Mammary epithelial cell (primary cell): ENCODE measurements at regions of chr15 and their contacts with region 1.

Region 1: GRCh38 chr15:101258238-101259144 is 6.6 kb upstream of the CHSY1 start:
- DNase-seq: no peak
- H3K4me3 ChIP-seq: no peak overlapping the region
- H3K27ac ChIP-seq: no peak overlapping the region
- H3K4me1 ChIP-seq: no peaks in the 10 kb centered on the region
- H3K27me3 ChIP-seq: no peaks in the 10 kb centered on the region
- CTCF ChIP-seq: peak; percentile 77 to 96

Region 2: DNA sequence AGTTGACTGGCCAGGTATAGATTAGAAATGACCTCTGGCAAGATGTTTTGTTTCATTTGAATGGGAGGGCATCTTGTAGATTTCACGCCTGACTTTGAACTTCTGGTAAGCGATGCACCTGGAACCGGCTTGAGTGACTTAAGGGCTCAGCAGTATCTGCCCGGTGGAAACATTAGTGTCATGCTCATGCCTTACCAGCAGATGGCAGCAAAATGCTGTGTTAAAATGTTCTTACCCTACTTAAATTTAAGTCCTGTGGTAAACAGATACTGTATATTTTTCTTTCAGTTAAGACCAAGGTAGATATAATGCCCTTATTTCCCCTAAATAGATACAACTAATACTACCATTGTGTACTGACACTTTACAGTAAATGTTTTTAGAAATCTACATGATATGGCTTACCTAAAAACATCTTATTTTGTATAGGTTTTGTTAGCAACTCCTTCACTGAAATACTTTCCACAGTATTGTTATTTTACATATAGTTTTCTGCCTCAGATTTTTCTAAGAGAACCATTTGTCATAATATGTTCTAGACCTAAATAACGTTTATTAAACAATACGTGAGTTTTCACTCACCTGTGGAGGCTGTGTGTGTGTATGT is 630.6 kb before region 1 on chr15:
- CTCF ChIA-PET with region 1: no interaction called
- dilution Hi-C with region 1: no loop called
- in situ Hi-C with region 1: loop called (anchors 25 kb)
- intact Hi-C with region 1: loop called (anchors 5 kb)
- DNase-seq: peak; percentile 64
- H3K4me3 ChIP-seq: no peak overlapping the region
- H3K27ac ChIP-seq: peak overlapping the region; percentile 5
- H3K4me1 ChIP-seq: no peaks in the 10 kb centered on the region
- H3K27me3 ChIP-seq: no peaks in the 10 kb centered on the region
- CTCF ChIP-seq: peak; percentile 73

Region 3: DNA sequence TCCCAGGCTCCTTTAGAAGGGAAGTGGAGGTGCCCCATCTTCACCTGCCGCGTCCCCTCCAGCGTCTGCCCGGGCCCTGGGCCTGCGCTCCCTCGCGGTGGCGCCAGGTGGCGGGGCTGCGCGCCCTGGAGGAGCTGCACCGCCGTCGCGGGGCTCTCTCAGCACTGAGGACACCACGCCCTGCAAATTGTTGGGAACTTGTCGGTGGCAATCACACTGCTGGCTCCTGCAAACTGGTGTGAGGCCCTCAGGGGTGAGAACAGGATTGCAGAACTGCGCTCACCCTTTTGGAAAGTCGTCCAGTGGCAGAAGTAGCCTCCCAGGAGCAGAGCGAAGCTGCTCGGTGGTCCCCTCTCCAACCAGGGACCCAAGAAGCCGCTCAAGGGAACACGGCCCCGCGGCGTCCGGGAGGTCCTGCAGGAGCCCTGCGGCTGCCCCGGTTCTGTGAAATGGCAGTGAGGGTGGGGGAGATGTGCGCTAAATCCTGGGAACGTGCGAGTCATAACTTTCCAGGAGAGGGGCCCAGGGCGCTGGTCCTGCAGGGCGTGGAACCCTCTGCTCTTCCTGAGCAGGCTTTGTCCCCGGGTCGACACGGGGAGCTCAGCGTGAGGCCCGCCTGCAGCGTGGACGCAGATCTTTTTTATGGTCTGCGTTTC is 340.3 kb before region 1 on chr15:
- CTCF ChIA-PET with region 1: no interaction called
- dilution Hi-C with region 1: no loop called
- in situ Hi-C with region 1: loop called (anchors 10 to 25 kb)
- intact Hi-C with region 1: loop called (anchors 5 kb)
- DNase-seq: peak; percentile 77
- H3K4me3 ChIP-seq: peak overlapping the region; percentile 64 to 72 (median 67)
- H3K27ac ChIP-seq: peak overlapping the region; percentile 48
- H3K4me1 ChIP-seq: peaks cover 39% of the 10 kb centered on the region
- H3K27me3 ChIP-seq: no peaks in the 10 kb centered on the region
- CTCF ChIP-seq: peak; percentile 83 to 94

Region 4: DNA sequence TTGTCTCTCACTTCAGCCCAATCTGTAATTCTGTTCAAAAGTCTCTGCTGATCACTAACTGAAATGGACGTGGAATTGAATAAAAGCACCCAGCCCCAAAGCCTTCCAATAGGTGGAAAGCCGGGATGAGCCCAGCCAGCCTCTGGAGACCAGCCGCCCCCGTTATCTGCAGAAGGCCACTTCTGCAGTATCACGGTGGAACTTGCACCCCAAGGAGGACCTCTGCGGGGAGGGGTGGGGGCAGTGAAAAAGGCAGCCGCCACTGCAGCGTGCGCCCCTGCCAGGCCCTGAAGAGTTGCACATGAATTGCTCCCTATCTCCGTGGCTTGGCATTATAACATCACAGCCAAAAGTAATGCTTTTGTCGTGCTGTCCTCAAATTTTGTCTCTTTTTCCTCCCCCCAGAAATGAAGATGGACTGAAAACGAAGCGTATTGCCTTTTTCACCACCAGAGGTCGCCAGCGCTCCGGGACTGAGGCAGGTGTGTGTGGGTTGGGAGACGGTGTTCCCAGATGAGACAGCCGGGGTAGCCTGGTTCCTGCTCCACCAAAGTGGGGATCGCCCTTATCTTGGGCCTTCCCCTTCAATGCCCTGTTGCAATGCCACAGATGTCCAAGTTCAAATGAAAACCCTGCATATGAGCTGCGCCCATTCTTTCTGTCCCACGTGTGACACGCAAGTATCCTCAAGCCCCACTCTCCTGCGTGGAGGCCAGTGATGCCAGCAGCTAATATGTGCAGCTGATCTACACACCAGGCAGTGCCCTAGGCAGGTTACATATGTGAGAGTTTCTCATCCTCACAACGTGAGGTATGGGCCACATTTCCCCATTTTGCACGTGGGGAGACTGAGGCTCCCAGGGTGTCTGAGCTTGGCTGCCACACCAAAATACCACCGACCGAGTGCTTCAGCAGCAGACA is 243.3 kb before region 1 on chr15:
- CTCF ChIA-PET with region 1: interaction called, 3 read pairs
- dilution Hi-C with region 1: no loop called
- in situ Hi-C with region 1: loop called (anchors 5 kb)
- intact Hi-C with region 1: loop called (anchors 1 kb)
- DNase-seq: peak; percentile 52
- H3K4me3 ChIP-seq: no peak overlapping the region
- H3K27ac ChIP-seq: no peak overlapping the region
- H3K4me1 ChIP-seq: no peaks in the 10 kb centered on the region
- H3K27me3 ChIP-seq: no peaks in the 10 kb centered on the region
- CTCF ChIP-seq: peak; percentile 95 to 96

Region 5: GRCh38 chr15:101027273-101027901 is 231.1 kb before region 1 on chr15:
- CTCF ChIA-PET with region 1: no interaction called
- dilution Hi-C with region 1: loop called (anchors 5 kb)
- in situ Hi-C with region 1: no loop called
- intact Hi-C with region 1: no loop called
- DNase-seq: no peak
- H3K4me3 ChIP-seq: no peak overlapping the region
- H3K27ac ChIP-seq: no peak overlapping the region
- H3K4me1 ChIP-seq: no peaks in the 10 kb centered on the region
- H3K27me3 ChIP-seq: no peaks in the 10 kb centered on the region
- CTCF ChIP-seq: no peak

Region 6: GRCh38 chr15:101115786-101116680 is 142.5 kb before region 1 on chr15:
- CTCF ChIA-PET with region 1: no interaction called
- dilution Hi-C with region 1: no loop called
- in situ Hi-C with region 1: no loop called
- intact Hi-C with region 1: no loop called
- DNase-seq: no peak
- H3K4me3 ChIP-seq: no peak overlapping the region
- H3K27ac ChIP-seq: no peak overlapping the region
- H3K4me1 ChIP-seq: peaks cover 25% of the 10 kb centered on the region
- H3K27me3 ChIP-seq: no peaks in the 10 kb centered on the region
- CTCF ChIP-seq: no peak

Region 7: GRCh38 chr15:101127506-101128076 is 130.9 kb before region 1 on chr15:
- CTCF ChIA-PET with region 1: no interaction called
- dilution Hi-C with region 1: no loop called
- in situ Hi-C with region 1: no loop called
- intact Hi-C with region 1: no loop called
- DNase-seq: peak; percentile 37
- H3K4me3 ChIP-seq: no peak overlapping the region
- H3K27ac ChIP-seq: peak overlapping the region; percentile 25
- H3K4me1 ChIP-seq: peaks cover 25% of the 10 kb centered on the region
- H3K27me3 ChIP-seq: no peaks in the 10 kb centered on the region
- CTCF ChIP-seq: no peak